Psoas muscle (tissue), 8 donors: ENCODE measurements at regions of chr7 and their contacts with region 1.

Region 1: DNA sequence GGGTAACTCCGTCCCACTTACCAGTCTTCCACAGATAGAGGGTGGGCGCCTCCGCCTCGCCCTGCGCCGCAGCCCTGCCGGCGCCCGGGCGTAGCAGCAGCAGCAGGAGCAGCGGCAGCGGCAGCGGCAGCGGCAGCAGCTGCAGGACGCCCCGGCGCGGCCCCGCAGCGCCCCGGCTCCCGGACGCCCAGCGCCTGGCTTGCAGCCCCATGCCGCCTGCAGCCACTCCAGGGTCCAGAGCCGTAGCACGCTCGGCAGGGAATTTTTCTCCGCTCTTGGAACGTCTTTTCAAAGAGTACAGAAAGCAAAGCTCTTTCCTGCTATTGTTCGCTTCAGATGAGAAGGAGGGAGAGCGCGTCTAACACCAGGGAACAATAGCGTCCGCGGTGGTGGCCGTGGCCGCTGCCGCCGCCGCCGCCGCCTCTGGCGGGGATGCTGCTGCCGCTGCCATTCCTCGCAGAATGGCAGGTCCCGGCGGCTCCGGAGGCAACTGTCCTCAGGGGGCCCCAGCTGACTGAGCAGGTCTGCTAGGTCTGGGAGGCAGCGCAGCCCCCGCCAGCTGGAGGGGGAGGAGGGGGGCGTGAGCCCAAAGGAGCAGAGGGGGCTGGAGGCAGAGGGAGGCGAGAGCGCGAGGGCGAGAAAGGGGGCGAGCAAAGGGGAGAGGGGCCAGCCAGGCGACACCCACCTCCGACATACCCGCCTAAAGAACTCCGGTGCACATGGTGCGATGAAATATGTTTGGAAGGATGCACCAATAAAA is at the start of gene THSD7A:
- DNase-seq: peak; percentile 18 to 52
- ATAC-seq: peak; percentile 35 to 77 (median 74)
- H3K4me3 ChIP-seq: peak within 1 kb of the TSS; percentile 64
- H3K27ac ChIP-seq: no peak within 1 kb of the TSS
- H3K4me1 ChIP-seq: no peaks in the 10 kb centered on the region
- H3K27me3 ChIP-seq: peaks cover 0 to 4% (median 0%) of the 10 kb centered on the region in 3 donors
- CTCF ChIP-seq: peak; percentile 12
- total RNA-seq, gene THSD7A: 0.21 to 1.4 (median 0.65) TPM

Region 2: DNA sequence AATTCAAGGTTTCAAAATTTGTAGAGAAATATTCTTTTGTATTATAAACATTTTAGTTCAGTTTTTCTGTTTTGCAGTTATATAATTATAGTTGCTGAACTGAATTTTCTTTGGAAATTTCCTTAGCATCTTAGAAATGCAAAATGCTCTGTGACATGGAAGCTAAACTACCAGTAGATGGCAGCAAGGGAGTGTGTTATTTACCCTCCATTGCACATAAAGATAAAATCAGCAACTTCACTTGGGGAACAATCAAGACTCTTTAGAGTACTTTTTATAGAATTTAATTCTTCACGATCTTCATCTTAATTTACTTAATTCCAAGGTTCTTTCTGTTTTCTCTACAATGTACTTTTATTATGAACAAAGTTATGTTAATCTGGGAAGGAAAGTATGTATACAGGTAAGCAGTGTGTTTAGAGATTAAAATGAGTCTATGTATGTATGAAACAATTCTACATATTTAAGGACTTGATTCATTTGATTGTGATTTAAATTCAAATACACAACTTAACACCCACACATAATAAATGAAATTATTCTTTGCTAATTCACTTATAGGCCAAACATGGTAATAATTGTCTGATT is 404.1 kb before region 1 on chr7:
- intact Hi-C with region 1: loop called in 1 of 2 experiments (anchors 10 kb)
- DNase-seq: no peak
- ATAC-seq: no peak
- H3K4me3 ChIP-seq: no peak overlapping the region
- H3K27ac ChIP-seq: no peak overlapping the region
- H3K4me1 ChIP-seq: no peaks in the 10 kb centered on the region
- H3K27me3 ChIP-seq: no peaks in the 10 kb centered on the region
- CTCF ChIP-seq: peak; percentile 63

Region 3: GRCh38 chr7:11792166-11792565 is 39.8 kb before region 1 on chr7:
- intact Hi-C with region 1: no loop called
- DNase-seq: no peak
- ATAC-seq: no peak
- H3K4me3 ChIP-seq: no peak overlapping the region
- H3K27ac ChIP-seq: no peak overlapping the region
- H3K4me1 ChIP-seq: no peaks in the 10 kb centered on the region
- H3K27me3 ChIP-seq: no peaks in the 10 kb centered on the region
- CTCF ChIP-seq: no peak